Activated T-helper 1 cell treated with anti-CD3 and anti-CD28 coated beads, Interleukin-12 subunit alpha, Interleukin-12 subunit beta, Interleukin-2, Interleukin-4 antibody, amounts not matched to agents 30 ng/mL and 10 ng/mL and 1 ng/mL, durations not matched to agents 14 hours and 24 hours and 36 hours (primary cell): ENCODE measurements at regions of chr21 and their contacts with region 1.

Region 1: GRCh38 chr21:35179990-35180540 is 131.0 kb upstream of the RUNX1 start:
- DNase-seq: no peak
- H3K4me3 Mint-ChIP-seq: no peak overlapping the region
- H3K27ac Mint-ChIP-seq: no peak overlapping the region
- H3K4me1 Mint-ChIP-seq: peaks cover 21% of the 10 kb centered on the region
- H3K27me3 Mint-ChIP-seq: peaks cover 3% of the 10 kb centered on the region

Region 2: GRCh38 chr21:35217504-35218060 is 37.5 kb after region 1 on chr21:
- intact Hi-C with region 1: loop called (anchors 5 kb)
- DNase-seq: no peak
- H3K4me3 Mint-ChIP-seq: no peak overlapping the region
- H3K27ac Mint-ChIP-seq: peak overlapping the region; percentile 56
- H3K4me1 Mint-ChIP-seq: peaks cover 33% of the 10 kb centered on the region
- H3K27me3 Mint-ChIP-seq: peaks cover 5% of the 10 kb centered on the region